ENCODE measurements at regions of chr2 and their contacts with region 1.

Region 1: GRCh38 chr2:207265869-207266268 is 100.1 kb upstream of the KLF7 start:
- DNase-seq: no peak
- CTCF ChIP-seq: no peak

Region 2: GRCh38 chr2:207283356-207283755 is 17.5 kb after region 1 on chr2:
- CTCF ChIA-PET with region 1: interaction called, 23 read pairs
- POLR2A ChIA-PET with region 1: no interaction called
- DNase-seq: no peak
- CTCF ChIP-seq: no peak

Measured in GM10248 (cell line).